Psoas muscle (tissue), 8 donors: ENCODE measurements at regions of chr19 and their contacts with region 1.

Region 1: GRCh38 chr19:32599736-32600157 is 18.8 kb downstream of the PDCD5 start:
- DNase-seq: peak in 1 of 2 donors; percentile 15
- ATAC-seq: peak in 3 of 4 donors; percentile 41 to 72 (median 55)
- H3K4me3 ChIP-seq: no peak overlapping the region
- H3K27ac ChIP-seq: no peak overlapping the region
- H3K4me1 ChIP-seq: no peaks in the 10 kb centered on the region
- H3K27me3 ChIP-seq: no peaks in the 10 kb centered on the region
- CTCF ChIP-seq: peak; percentile 81

Region 2: DNA sequence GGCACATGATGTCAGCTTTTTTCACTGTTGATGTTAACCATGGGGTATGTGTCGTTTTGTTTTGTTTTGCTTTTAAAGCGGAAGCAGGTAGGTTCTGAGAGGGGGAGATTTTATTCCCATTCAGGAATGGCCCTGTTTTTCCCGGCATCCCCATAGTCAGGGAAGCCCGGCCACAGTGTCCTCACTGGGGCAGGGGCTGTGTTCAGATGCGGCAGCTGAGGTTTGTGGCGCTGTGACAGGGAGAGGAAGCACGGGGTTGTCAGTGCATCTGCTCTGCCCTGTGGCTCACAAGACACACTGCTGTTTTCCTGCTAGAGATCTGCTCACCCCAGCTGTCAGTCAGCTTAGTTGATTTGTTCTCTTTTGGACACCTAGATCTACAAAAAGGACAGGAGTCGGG is 47.6 kb after region 1 on chr19:
- intact Hi-C with region 1: loop called in 1 of 2 experiments (anchors 5 kb)
- DNase-seq: no peak
- ATAC-seq: no peak
- H3K4me3 ChIP-seq: no peak overlapping the region
- H3K27ac ChIP-seq: no peak overlapping the region
- H3K4me1 ChIP-seq: peaks cover 7% of the 10 kb centered on the region
- H3K27me3 ChIP-seq: no peaks in the 10 kb centered on the region
- CTCF ChIP-seq: no peak